AG04450 (cell line): ENCODE measurements at regions of chr13 and their contacts with region 1.

Region 1: DNA sequence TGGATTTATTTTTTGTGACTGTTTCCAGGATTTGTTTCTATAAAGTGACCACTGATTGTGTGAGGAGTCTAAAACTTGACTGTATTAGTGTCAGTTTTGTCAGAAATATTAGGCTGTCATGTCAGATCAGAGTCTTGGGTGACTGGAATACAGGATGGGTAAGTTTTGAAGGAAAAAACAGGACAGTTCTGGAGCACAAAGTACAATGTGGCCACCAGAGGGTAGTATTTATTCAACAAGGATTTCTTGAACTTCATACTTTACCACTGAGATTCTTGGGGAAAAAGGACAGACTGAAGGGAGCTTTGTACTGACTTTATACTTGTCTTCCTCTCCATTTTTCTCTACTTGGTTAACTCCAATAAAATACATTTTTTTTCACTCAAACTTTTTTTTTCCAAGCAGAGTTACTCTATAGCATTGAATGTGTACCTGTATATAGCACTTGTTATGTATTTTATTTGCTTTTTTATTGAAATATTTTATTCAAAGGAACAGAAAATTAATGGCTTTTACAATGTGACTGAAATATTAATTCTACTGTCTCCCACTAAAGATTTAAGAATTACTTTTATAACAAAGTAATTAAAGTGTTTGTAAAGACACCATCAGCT is 51.1 kb downstream of the LMO7 start:
- DNase-seq: no peak
- H3K4me3 ChIP-seq: no peak overlapping the region
- H3K27ac ChIP-seq: no peak overlapping the region
- H3K27me3 ChIP-seq: no peaks in the 10 kb centered on the region
- CTCF ChIP-seq: peak; percentile 63

Region 2: DNA sequence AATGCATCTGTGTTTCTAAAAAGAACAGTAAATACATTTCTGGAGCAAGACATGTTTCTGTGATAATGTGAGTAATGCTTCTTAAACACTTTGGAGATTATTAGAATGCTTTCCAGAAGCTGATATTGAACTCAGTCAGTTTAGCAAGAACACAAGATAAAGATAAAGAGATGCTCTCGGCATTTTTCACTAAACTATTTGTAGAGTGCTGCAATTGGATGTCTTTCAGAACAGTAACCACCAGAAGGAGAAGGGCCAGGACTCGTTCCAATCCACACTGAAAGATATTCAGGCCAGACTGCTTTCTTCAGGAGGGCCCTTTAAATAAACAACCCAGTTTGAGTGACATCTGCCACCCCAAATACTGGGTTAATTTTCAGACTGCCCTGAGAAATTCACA is 661.3 kb before region 1 on chr13:
- CTCF ChIA-PET with region 1: no interaction called
- POLR2A ChIA-PET with region 1: no interaction called
- DNase-seq: no peak
- H3K4me3 ChIP-seq: no peak overlapping the region
- H3K27ac ChIP-seq: no peak overlapping the region
- H3K27me3 ChIP-seq: no peaks in the 10 kb centered on the region
- CTCF ChIP-seq: no peak

Region 3: GRCh38 chr13:75285310-75285709 is 401.9 kb before region 1 on chr13:
- CTCF ChIA-PET with region 1: no interaction called
- POLR2A ChIA-PET with region 1: no interaction called
- DNase-seq: no peak
- H3K4me3 ChIP-seq: no peak overlapping the region
- H3K27ac ChIP-seq: no peak overlapping the region
- H3K27me3 ChIP-seq: no peaks in the 10 kb centered on the region
- CTCF ChIP-seq: no peak

Region 4: GRCh38 chr13:75675421-75675820 is 11.8 kb before region 1 on chr13:
- CTCF ChIA-PET with region 1: interaction called, 106 read pairs
- POLR2A ChIA-PET with region 1: interaction called, 3 read pairs
- DNase-seq: no peak
- H3K4me3 ChIP-seq: no peak overlapping the region
- H3K27ac ChIP-seq: no peak overlapping the region
- H3K27me3 ChIP-seq: no peaks in the 10 kb centered on the region
- CTCF ChIP-seq: no peak

Region 5: GRCh38 chr13:75704579-75705320 is 17.5 kb after region 1 on chr13:
- CTCF ChIA-PET with region 1: interaction called, 11 read pairs
- POLR2A ChIA-PET with region 1: no interaction called
- DNase-seq: peak; percentile 48
- H3K4me3 ChIP-seq: no peak overlapping the region
- H3K27ac ChIP-seq: no peak overlapping the region
- H3K27me3 ChIP-seq: no peaks in the 10 kb centered on the region
- CTCF ChIP-seq: no peak

Region 6: GRCh38 chr13:75864718-75865117 is 177.5 kb after region 1 on chr13:
- CTCF ChIA-PET with region 1: interaction called, 80 read pairs
- POLR2A ChIA-PET with region 1: no interaction called
- DNase-seq: peak; percentile 76
- H3K4me3 ChIP-seq: no peak overlapping the region
- H3K27ac ChIP-seq: peak overlapping the region; percentile 34
- H3K27me3 ChIP-seq: no peaks in the 10 kb centered on the region
- CTCF ChIP-seq: no peak

Region 7: GRCh38 chr13:75870397-75870903 is 183.2 kb after region 1 on chr13:
- CTCF ChIA-PET with region 1: interaction called, 80 read pairs
- POLR2A ChIA-PET with region 1: no interaction called
- DNase-seq: no peak
- H3K4me3 ChIP-seq: peak overlapping the region; percentile 47
- H3K27ac ChIP-seq: no peak overlapping the region
- H3K27me3 ChIP-seq: no peaks in the 10 kb centered on the region
- CTCF ChIP-seq: peak; percentile 79

Region 8: DNA sequence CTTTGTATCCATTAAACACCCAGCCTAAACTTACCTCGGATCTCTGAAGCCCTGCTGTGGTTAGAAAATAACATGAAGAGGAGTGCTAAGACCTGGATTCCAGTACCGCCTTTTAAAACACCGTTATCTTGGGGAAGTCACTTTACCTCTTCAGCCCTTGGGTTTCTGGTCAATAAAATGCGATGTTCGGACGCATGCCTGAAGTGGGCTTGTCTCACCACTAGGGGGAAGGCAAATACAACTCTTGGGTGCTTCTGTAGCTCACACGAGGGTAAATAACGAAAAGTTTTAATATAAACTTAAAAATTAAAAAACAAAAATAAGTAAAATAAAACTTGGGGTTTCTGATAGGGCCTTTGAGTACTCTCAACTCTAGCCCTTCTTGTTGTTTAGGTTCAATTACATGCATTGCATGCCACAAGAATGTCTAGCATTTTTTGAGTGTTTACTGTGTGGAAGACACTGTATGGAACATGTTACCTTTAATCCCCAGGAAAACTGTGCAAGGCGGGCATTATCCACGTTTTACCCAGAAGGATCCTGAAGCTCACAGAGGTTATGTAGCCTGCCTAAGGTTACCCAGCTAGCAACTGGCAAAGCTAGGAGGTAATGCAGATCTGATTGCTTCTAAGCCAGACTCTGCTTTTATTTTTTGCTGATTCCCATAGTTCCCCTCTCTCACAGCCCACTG is 189.2 kb after region 1 on chr13:
- CTCF ChIA-PET with region 1: interaction called, 80 read pairs
- POLR2A ChIA-PET with region 1: no interaction called
- DNase-seq: peak; percentile 26
- H3K4me3 ChIP-seq: no peak overlapping the region
- H3K27ac ChIP-seq: no peak overlapping the region
- H3K27me3 ChIP-seq: peaks cover 4% of the 10 kb centered on the region
- CTCF ChIP-seq: peak; percentile 92

Region 9: DNA sequence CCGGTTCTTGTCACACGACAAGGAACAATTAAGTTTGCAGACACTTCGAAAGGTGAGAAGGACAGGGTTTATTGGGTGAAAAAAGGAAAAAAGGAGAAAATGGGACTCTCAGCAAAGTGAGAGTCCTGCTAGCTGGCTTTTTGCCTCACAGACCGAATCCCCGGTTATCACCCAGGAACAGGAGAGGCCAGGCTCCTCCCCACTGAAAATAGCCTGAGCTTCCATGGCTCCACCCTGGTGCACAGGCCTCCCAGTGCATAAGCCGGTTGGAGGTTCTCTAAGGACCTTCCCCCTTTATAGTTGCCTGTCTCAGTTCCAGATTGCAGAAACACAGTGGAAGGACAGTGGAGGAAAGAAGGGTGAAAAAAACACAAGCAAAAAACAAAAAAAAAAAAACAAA is 627.2 kb after region 1 on chr13:
- CTCF ChIA-PET with region 1: no interaction called
- POLR2A ChIA-PET with region 1: no interaction called
- DNase-seq: no peak
- H3K4me3 ChIP-seq: no peak overlapping the region
- H3K27ac ChIP-seq: no peak overlapping the region
- H3K27me3 ChIP-seq: no peaks in the 10 kb centered on the region
- CTCF ChIP-seq: no peak

Region 10: DNA sequence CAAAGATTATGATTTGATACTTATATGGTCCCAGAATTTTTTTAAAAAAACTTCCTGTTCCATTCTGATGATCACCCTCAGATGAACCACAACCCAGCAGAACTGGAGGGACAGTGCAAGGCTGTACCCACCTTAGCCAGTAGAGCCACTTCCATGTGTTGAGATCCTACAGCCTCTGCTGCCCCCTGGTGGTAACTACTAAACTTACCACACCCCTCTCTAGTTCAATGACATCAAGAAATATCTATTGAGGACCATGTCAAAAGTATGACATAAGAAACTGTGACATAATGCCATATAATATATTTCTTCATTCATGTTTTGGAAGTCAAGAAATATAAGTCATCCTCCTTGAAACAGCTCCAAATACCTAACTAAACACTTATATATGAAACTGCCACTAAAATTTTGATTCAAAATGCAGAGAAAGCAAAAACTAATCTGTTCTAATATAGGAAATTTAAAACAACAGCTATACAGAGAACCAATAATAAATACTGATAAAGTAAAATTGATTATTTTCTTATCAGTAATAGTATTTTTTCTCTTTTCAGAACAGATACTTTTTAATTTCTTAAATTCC is 786.4 kb after region 1 on chr13:
- CTCF ChIA-PET with region 1: interaction called, 26 read pairs
- POLR2A ChIA-PET with region 1: no interaction called
- DNase-seq: peak; percentile 52
- H3K4me3 ChIP-seq: no peak overlapping the region
- H3K27ac ChIP-seq: no peak overlapping the region
- H3K27me3 ChIP-seq: peaks cover 2% of the 10 kb centered on the region
- CTCF ChIP-seq: peak; percentile 86